ENCODE measurements at regions of chr12 and their contacts with region 1.

Region 1: GRCh38 chr12:69585189-69586062 is at the start of gene CCT2:
- H3K4me3 Mint-ChIP-seq: peak within 1 kb of the TSS; percentile 97
- H3K27ac Mint-ChIP-seq: peak within 1 kb of the TSS; percentile 97
- H3K4me1 Mint-ChIP-seq: no peaks in the 10 kb centered on the region
- H3K27me3 Mint-ChIP-seq: no peaks in the 10 kb centered on the region

Region 2: GRCh38 chr12:69359531-69360347 is 225.7 kb before region 1 on chr12 and contains the start of gene YEATS4:
- intact Hi-C with region 1: loop called (anchors 1 kb)
- H3K4me3 Mint-ChIP-seq: peak within 1 kb of the TSS; percentile 78
- H3K27ac Mint-ChIP-seq: peak within 1 kb of the TSS; percentile 87
- H3K4me1 Mint-ChIP-seq: peaks cover 27% of the 10 kb centered on the region
- H3K27me3 Mint-ChIP-seq: no peaks in the 10 kb centered on the region

Region 3: DNA sequence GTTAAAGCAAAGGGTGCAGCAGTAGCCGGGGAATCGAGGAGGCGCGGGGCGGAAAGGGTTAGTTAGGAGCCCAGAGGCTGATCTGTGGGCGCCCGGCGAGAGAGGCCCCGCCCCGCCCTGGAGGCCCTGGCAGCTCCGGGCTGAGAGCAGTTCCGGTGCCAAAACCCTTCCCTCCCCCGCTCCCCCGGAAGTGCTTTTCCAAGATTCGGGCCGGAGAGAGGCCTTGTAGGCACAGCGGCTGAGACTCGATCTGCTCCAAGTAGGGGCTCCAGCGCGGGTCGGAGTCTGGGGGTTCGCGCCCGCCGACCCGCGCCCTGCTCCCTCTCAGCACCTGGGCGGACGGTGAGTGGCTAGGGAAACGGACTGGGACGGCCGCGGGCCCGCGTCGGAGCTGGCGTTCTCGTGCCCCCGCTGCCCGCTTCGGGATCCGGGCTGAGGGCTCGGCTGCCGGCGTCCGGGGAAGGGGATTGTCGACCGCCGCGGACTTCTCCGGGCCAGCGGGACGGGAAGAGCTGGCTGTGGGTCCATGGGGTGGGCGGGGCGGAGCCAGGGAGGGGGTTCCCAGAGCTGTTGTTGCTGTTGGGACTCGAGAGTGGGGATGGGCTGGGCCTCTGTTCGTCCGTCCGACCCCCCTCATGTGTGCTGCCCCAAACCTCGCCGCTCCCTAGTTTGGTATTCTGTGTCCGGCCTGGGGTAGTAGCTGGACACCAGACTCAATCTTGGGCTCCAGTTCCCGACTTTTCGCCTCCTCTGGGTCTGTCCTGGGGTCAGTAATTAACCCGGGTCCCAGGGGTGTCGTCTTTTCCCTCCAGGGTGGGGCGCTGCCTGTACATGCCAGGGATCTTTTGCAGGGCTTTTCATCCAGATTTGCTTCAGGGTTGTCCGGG is 115.0 kb before region 1 on chr12 and contains the start of gene FRS2:
- intact Hi-C with region 1: loop called (anchors 1 kb)
- H3K4me3 Mint-ChIP-seq: peak within 1 kb of the TSS; percentile 98
- H3K27ac Mint-ChIP-seq: peak within 1 kb of the TSS; percentile 98
- H3K4me1 Mint-ChIP-seq: peaks cover 59% of the 10 kb centered on the region
- H3K27me3 Mint-ChIP-seq: no peaks in the 10 kb centered on the region

Region 4: GRCh38 chr12:69639400-69640016 is 54.1 kb after region 1 on chr12:
- intact Hi-C with region 1: loop called (anchors 5 kb)
- H3K4me3 Mint-ChIP-seq: no peak overlapping the region
- H3K27ac Mint-ChIP-seq: no peak overlapping the region
- H3K4me1 Mint-ChIP-seq: no peaks in the 10 kb centered on the region
- H3K27me3 Mint-ChIP-seq: no peaks in the 10 kb centered on the region

Measured in dendritic cell treated with granulocyte-macrophage colony-stimulating factor and Interleukin-4, amounts not matched to agents 40 ng/mL and 50 ng/mL, for 4 days (primary cell).